Heart left ventricle (tissue), 16 donors: ENCODE measurements at regions of chr18 and their contacts with region 1.

Region 1: GRCh38 chr18:48030616-48031480 is 100.4 kb upstream of the SMAD2 start:
- DNase-seq: peak in 2 of 5 donors; percentile 48 to 60
- ATAC-seq: peak; percentile 43 to 86 (median 76)
- H3K4me3 ChIP-seq: no peak overlapping the region
- H3K27ac ChIP-seq: no peak overlapping the region
- H3K4me1 ChIP-seq: peaks cover 0 to 26% (median 11%) of the 10 kb centered on the region in 12 donors
- H3K27me3 ChIP-seq: no peaks in the 10 kb centered on the region
- CTCF ChIP-seq: peak; percentile 51 to 81 (median 74)
- POLR2A ChIP-seq: no peak

Region 2: GRCh38 chr18:48106976-48107711 is 76.3 kb after region 1 on chr18:
- intact Hi-C with region 1: loop called in 1 of 10 experiments (anchors 5 kb)
- DNase-seq: no peak
- ATAC-seq: peak in 1 of 4 donors; percentile 32
- H3K4me3 ChIP-seq: no peak overlapping the region
- H3K27ac ChIP-seq: no peak overlapping the region
- H3K4me1 ChIP-seq: peaks cover 0 to 4% (median 0%) of the 10 kb centered on the region in 12 donors
- H3K27me3 ChIP-seq: peaks cover 0 to 4% (median 0%) of the 10 kb centered on the region in 9 donors
- CTCF ChIP-seq: no peak
- POLR2A ChIP-seq: no peak

Region 3: DNA sequence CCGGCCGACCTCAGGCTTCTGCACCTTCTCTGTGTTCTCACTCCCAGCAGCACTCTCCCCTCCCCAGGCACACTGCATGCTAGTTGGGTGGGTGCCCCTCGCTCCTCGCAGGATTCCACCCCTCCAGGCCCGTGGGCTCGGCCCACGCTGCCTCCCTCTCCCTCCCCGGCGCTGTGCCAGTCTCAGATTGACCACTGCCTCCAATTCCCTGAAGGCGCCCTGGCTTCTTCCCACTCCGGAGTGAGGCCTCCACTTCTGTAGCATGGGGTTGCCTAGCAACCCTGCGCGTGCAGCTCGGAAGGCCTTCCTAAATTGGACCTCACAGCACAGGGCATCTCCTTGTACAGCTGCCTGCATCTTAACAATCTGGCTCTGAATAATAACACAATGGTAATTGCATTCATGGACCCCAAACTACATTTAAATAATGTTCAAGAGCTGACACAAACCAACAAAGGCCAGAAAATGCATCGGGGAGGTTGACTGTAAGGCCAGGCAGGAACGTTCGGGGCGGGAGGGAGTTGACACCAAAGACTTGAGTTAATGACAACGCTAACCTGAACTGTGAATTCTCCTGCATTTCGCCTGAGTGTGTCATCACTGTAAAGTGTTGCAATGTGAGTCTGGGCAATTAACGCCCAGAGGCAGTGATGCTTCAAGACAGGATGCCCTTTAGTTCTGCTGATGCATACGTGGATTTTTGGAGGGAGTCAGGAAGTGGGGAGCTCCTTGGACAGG is 155.4 kb after region 1 on chr18:
- intact Hi-C with region 1: loop called in 1 of 10 experiments (anchors 10 kb)
- DNase-seq: peak in 1 of 5 donors; percentile 60
- ATAC-seq: peak in 3 of 4 donors; percentile 20 to 73 (median 64)
- H3K4me3 ChIP-seq: no peak overlapping the region
- H3K27ac ChIP-seq: peak overlapping the region in 1 of 12 donors; percentile 28
- H3K4me1 ChIP-seq: peaks cover 0 to 13% (median 0%) of the 10 kb centered on the region in 12 donors
- H3K27me3 ChIP-seq: no peaks in the 10 kb centered on the region
- CTCF ChIP-seq: no peak
- POLR2A ChIP-seq: no peak

Region 4: DNA sequence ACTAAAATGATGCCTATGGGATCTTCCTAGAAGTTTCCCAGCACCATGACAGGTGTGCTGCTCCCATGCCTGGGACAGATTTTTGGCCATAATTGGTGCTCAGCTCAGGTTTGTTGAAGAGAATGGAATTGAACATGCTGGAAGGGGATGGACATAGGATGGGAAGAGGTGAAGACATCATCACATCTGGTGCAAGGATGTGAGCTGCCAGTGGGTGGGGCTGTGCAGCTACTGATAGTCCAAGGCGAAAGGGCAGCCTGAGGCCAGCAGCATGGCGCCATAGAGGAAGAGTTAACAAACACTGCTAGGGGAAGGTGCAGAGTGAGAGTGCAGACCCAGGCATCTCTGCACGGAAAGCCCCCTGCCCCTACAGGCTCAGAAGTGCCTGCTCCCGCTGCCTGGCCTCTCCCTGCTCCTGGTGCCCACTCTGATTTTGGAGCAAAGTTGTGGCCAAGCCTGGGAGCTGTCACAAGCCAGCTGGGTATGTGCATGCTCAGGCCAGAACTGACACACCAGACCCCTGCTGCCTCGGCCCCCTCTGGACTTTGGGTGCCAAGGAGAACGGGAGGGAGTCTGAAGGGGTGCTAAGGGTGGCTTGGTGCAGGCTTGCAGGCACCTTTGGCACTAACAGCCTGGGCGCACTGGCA is 199.7 kb after region 1 on chr18:
- intact Hi-C with region 1: loop called in 3 of 10 experiments (anchors 5 to 10 kb)
- DNase-seq: peak in 2 of 5 donors; percentile 40 to 55
- ATAC-seq: peak; percentile 37 to 71 (median 59)
- H3K4me3 ChIP-seq: no peak overlapping the region
- H3K27ac ChIP-seq: no peak overlapping the region
- H3K4me1 ChIP-seq: peaks cover 0 to 38% (median 22%) of the 10 kb centered on the region in 12 donors
- H3K27me3 ChIP-seq: no peaks in the 10 kb centered on the region
- CTCF ChIP-seq: peak in 10 of 12 donors; percentile 18 to 54 (median 44)
- POLR2A ChIP-seq: no peak

Region 5: GRCh38 chr18:48345596-48345995 is 314.7 kb after region 1 on chr18:
- intact Hi-C with region 1: loop called in 7 of 10 experiments (anchors 5 to 10 kb)
- DNase-seq: no peak
- ATAC-seq: peak in 2 of 4 donors; percentile 38 to 51
- H3K4me3 ChIP-seq: no peak overlapping the region
- H3K27ac ChIP-seq: no peak overlapping the region
- H3K4me1 ChIP-seq: peaks cover 0 to 13% (median 5%) of the 10 kb centered on the region in 12 donors
- H3K27me3 ChIP-seq: no peaks in the 10 kb centered on the region
- CTCF ChIP-seq: peak in 8 of 12 donors; percentile 11 to 40 (median 26)
- POLR2A ChIP-seq: no peak

Region 6: DNA sequence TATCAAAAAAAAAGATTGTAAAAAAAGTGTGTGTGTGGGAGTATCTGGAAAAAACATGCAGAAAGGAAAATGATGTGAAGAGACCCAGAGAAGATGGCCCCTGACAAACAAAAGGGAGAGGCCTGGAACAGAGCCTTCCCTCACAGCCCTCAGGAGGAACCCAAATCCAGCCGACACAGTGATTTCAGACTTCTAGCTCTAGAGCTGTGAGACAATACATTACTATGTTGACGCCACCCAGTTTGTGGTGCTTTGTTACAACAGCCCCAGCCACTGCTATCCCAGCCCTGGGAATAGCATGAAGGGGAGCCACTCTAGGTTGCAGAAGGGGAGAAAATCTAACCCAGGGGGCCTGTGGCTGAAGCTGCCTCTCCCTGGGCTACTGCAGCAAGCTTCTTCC is 437.3 kb after region 1 on chr18:
- intact Hi-C with region 1: loop called in 2 of 10 experiments (anchors 5 kb)
- DNase-seq: no peak
- ATAC-seq: no peak
- H3K4me3 ChIP-seq: no peak overlapping the region
- H3K27ac ChIP-seq: no peak overlapping the region
- H3K4me1 ChIP-seq: peaks cover 0 to 23% (median 9%) of the 10 kb centered on the region in 12 donors
- H3K27me3 ChIP-seq: no peaks in the 10 kb centered on the region
- CTCF ChIP-seq: no peak
- POLR2A ChIP-seq: no peak